ENCODE measurements at regions of chr11 and their contacts with region 1.

Region 1: DNA sequence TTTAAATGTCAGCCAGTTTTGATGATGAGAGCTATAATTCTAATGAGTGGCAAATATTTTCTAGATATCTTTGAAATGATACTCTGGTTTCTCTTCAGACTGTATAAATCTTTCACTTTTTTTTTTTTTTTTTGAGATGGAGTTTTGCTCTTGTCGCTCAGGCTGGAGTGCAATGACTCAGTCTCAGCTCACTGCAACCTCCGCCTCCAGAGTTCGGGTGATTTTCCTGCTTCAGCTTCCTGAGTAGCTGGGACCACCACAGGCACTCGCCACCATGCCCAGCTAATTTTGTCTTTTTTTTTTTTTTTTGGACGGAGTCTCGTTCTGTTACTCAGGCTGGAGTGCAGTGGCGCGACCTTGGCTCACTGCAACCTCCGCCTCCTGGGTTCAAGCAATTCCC is 113.6 kb downstream of the TEAD1 start:
- DNase-seq: peak; percentile 68
- H3K4me3 Mint-ChIP-seq: no peak overlapping the region
- H3K27ac Mint-ChIP-seq: no peak overlapping the region
- H3K4me1 Mint-ChIP-seq: peaks cover 35% of the 10 kb centered on the region
- H3K27me3 Mint-ChIP-seq: no peaks in the 10 kb centered on the region
- CTCF ChIP-seq: no peak

Region 2: DNA sequence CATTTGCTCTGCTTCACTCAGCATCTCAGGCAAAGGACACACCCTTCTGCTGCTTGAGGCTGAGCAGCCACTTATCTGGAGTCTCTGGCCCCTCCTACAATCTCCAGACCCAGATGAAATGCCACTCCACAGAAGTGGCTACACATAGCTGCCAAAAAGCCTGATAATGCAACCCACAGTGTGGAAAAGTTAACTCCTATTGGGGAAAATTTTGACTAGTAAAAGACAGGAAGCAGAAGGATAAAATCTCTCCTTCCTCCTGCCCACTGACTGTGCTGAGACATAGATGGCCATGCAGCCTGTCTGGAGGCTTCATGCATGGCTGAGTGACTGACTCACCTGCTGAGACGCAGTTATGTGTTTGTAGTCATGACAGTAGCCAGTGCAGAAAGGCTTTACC is 205.9 kb before region 1 on chr11:
- CTCF ChIA-PET with region 1: no interaction called
- POLR2A ChIA-PET with region 1: no interaction called
- intact Hi-C with region 1: no loop called
- DNase-seq: peak; percentile 50
- H3K4me3 Mint-ChIP-seq: no peak overlapping the region
- H3K27ac Mint-ChIP-seq: no peak overlapping the region
- H3K4me1 Mint-ChIP-seq: peaks cover 10% of the 10 kb centered on the region
- H3K27me3 Mint-ChIP-seq: peaks cover 10% of the 10 kb centered on the region
- CTCF ChIP-seq: no peak

Region 3: DNA sequence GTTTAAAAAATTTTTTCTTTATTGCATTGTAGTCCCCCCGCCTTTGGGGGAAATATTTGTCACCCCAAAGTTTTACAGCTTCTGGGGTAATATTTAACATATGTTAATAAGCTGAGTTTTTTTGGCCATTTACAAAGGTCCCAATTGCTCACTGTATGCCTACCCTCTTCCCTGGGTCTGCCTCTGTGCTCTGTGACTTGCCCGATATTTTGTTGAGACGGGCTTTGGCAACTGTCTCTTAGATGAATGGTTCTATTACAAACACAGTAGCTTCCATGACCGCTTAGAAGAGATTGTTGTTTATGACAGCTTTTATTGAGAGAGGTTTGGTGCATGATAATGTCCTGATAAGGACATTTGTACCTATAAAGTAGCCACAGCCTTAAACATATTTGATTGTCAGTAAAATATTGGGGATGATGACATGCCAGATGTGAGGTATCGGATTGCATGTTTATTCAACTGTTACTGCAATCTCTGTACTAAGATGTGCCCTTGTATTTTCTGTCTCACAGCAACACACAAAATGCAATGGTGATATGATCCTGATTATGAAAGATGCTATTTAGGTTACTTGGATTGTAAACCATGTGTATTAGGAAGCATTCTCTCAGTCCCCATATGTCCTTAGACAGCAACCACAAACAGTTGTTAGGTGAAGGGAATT is 10.5 kb before region 1 on chr11:
- CTCF ChIA-PET with region 1: interaction called, 3 read pairs
- POLR2A ChIA-PET with region 1: interaction called, 15 read pairs
- intact Hi-C with region 1: no loop called
- DNase-seq: peak; percentile 62
- H3K4me3 Mint-ChIP-seq: no peak overlapping the region
- H3K27ac Mint-ChIP-seq: peak overlapping the region; percentile 90
- H3K4me1 Mint-ChIP-seq: peaks cover 37% of the 10 kb centered on the region
- H3K27me3 Mint-ChIP-seq: no peaks in the 10 kb centered on the region
- CTCF ChIP-seq: no peak